ENCODE measurements at regions of chr6 and their contacts with region 1.

Region 1: GRCh38 chr6:170286246-170286933 is 4.5 kb downstream of the DLL1 start:
- DNase-seq: peak in 1 of 2 donors; percentile 77
- ATAC-seq: no peak
- H3K4me3 ChIP-seq: no peak overlapping the region
- H3K27ac ChIP-seq: no peak overlapping the region
- H3K4me1 ChIP-seq: no peaks in the 10 kb centered on the region
- H3K27me3 ChIP-seq: no peaks in the 10 kb centered on the region

Region 2: GRCh38 chr6:169959136-169960002 is 327.0 kb before region 1 on chr6:
- intact Hi-C with region 1: loop called (anchors 5 to 10 kb)
- DNase-seq: peak; percentile 69 to 74
- ATAC-seq: no peak
- H3K4me3 ChIP-seq: no peak overlapping the region
- H3K27ac ChIP-seq: no peak overlapping the region
- H3K4me1 ChIP-seq: no peaks in the 10 kb centered on the region
- H3K27me3 ChIP-seq: no peaks in the 10 kb centered on the region

Region 3: GRCh38 chr6:170243791-170244291 is 42.5 kb before region 1 on chr6:
- intact Hi-C with region 1: no loop called
- DNase-seq: peak; percentile 38 to 51
- ATAC-seq: no peak
- H3K4me3 ChIP-seq: no peak overlapping the region
- H3K27ac ChIP-seq: no peak overlapping the region
- H3K4me1 ChIP-seq: no peaks in the 10 kb centered on the region
- H3K27me3 ChIP-seq: no peaks in the 10 kb centered on the region

Region 4: DNA sequence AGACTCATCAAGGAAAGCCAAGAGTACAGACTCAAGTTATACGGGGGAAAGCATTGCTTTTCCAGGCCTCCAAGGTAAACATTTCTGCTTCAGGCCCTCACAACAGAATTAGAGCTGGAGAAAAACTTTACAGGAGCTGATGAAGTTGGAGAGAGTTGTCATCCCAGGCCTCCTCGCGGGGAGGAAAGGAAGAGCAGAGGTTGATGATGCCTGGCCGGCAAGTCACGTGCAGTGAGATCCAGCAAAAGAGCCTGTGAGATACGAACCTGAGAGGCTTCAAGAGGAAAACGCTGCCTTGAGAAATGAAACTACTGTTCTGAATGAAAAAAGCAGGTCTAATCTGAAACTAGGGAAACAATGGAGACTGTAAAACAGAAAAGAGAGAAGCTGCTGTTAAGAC is 143.1 kb after region 1 on chr6:
- intact Hi-C with region 1: no loop called
- DNase-seq: no peak
- ATAC-seq: no peak
- H3K4me3 ChIP-seq: no peak overlapping the region
- H3K27ac ChIP-seq: no peak overlapping the region
- H3K4me1 ChIP-seq: no peaks in the 10 kb centered on the region
- H3K27me3 ChIP-seq: no peaks in the 10 kb centered on the region